Endothelial cell of umbilical vein (primary cell): ENCODE measurements at regions of chr17 and their contacts with region 1.

Region 1: GRCh38 chr17:42527273-42527703 is 8.8 kb upstream of the NAGLU start:
- DNase-seq: peak; percentile 90
- H3K4me3 ChIP-seq: no peak overlapping the region
- H3K27ac ChIP-seq: peak overlapping the region; percentile 32
- H3K4me1 ChIP-seq: peaks cover 19% of the 10 kb centered on the region
- H3K27me3 ChIP-seq: no peaks in the 10 kb centered on the region
- CTCF ChIP-seq: peak; percentile 85 to 86
- POLR2A ChIP-seq: no peak

Region 2: GRCh38 chr17:42067351-42068091 is 459.8 kb before region 1 on chr17:
- CTCF ChIA-PET with region 1: no interaction called
- POLR2A ChIA-PET with region 1: no interaction called
- dilution Hi-C with region 1: no loop called
- intact Hi-C with region 1: loop called (anchors 1 kb)
- DNase-seq: peak; percentile 57
- H3K4me3 ChIP-seq: no peak overlapping the region
- H3K27ac ChIP-seq: no peak overlapping the region
- H3K4me1 ChIP-seq: peaks cover 3% of the 10 kb centered on the region
- H3K27me3 ChIP-seq: peaks cover 0 to 9% of the 10 kb centered on the region in 2 experiments
- CTCF ChIP-seq: peak; percentile 76 to 89
- POLR2A ChIP-seq: no peak

Region 3: DNA sequence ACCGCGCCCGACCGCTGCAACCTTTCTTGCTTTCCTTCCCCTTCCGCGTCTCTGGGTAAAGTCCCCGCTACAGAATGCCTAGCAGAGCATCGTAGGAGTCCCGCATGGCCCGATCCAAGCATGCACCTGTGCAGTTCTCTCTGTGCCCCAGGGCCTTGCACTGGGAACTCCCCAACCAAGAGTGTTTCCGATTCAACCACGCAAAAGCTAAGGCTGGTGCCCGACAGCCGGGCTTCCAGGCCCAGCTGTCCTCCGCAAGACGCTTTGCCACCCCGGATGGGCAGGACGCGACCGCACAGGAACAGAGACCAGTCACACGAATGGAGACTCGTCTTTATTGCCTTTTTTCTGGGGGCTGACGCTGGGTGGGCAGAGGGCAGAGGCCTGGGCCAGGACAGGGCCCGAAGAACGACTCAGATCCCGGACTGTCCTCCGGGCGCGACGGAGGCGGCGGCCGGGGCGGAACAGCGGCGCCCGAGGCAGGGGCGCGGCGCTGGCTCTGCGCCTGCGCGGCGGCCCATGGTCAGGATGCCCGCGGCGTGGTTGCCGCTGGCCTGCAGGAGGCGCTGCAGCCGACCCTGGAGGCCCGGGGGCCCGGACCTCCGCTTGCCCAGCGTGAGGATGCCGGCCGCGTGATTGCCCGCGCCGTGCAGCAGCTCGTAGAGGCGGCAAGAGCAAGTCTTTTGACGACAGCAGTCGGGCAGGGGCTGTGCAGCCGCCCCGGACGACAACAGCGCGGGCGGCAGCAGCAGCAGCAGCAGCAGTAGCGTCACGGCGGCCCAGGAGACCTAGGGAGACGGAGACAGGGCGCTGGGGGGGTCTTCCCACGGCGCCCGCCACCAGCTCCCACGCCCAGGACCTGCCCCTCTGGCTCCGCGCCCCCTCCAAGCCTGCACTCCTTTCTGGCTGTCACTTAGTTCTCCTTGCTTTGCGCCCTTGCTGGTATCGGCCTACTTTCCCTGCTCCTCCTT is 343.3 kb before region 1 on chr17:
- CTCF ChIA-PET with region 1: interaction called, 5 read pairs
- POLR2A ChIA-PET with region 1: interaction called, 9 read pairs
- dilution Hi-C with region 1: no loop called
- intact Hi-C with region 1: loop called (anchors 1 kb)
- DNase-seq: peak; percentile 70
- H3K4me3 ChIP-seq: peak overlapping the region; percentile 35 to 51 (median 45)
- H3K27ac ChIP-seq: peak overlapping the region; percentile 16
- H3K4me1 ChIP-seq: peaks cover 14% of the 10 kb centered on the region
- H3K27me3 ChIP-seq: peaks cover 9 to 13% of the 10 kb centered on the region in 2 experiments
- CTCF ChIP-seq: peak; percentile 86 to 99
- POLR2A ChIP-seq: peak; percentile 38

Region 4: GRCh38 chr17:42214156-42214555 is 313.1 kb before region 1 on chr17:
- CTCF ChIA-PET with region 1: no interaction called
- POLR2A ChIA-PET with region 1: no interaction called
- dilution Hi-C with region 1: no loop called
- intact Hi-C with region 1: no loop called
- DNase-seq: no peak
- H3K4me3 ChIP-seq: no peak overlapping the region
- H3K27ac ChIP-seq: no peak overlapping the region
- H3K4me1 ChIP-seq: no peaks in the 10 kb centered on the region
- H3K27me3 ChIP-seq: no peaks in the 10 kb centered on the region
- CTCF ChIP-seq: no peak
- POLR2A ChIP-seq: no peak

Region 5: DNA sequence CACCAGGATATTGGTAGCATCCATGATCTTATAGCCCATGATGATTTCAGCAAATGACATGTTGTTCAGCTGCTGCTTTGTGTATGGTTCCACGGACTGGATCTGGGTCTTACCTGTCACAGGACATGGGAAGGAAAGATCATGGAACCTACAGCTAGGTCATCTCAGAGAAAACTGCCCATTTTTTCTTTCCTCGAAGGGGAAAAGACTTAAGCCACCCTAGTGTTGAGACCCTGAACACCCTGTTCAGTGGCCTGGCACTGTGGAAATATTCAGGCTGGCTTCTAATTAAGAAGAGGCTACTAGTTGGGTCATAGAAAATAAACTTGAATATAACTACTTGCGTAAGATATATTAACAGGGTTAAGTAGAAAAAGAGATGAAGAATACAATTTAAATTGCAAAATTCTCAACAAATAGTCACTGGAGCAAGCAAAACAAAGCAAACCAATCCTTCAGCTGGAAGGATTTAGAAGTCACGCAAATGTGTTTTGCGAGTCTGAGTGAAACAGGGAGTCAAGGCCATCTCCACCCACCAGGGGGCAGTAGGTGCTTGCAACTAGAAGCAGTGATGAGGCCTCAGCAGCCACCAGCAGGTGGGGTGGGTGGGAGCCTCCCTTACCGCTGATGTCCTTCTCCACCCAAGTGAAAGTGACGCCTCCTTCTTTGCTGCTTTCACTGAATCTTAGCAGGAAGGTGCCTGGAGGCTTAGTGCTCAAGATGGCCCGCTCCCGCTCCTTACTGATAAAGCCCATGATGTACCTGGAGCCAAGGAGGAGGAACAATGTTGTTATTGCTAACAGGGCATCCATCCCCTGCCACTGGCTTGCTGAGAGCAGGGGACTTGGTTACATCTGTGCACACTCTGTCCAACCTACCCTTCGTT is 204.7 kb before region 1 on chr17:
- CTCF ChIA-PET with region 1: interaction called, 94 read pairs
- POLR2A ChIA-PET with region 1: no interaction called
- dilution Hi-C with region 1: loop called (anchors 25 kb)
- intact Hi-C with region 1: loop called (anchors 1 kb)
- DNase-seq: peak; percentile 92
- H3K4me3 ChIP-seq: no peak overlapping the region
- H3K27ac ChIP-seq: peak overlapping the region; percentile 97
- H3K4me1 ChIP-seq: peaks cover 35% of the 10 kb centered on the region
- H3K27me3 ChIP-seq: no peaks in the 10 kb centered on the region
- CTCF ChIP-seq: peak; percentile 97 to 99
- POLR2A ChIP-seq: no peak

Region 6: GRCh38 chr17:42422958-42423712 is 104.2 kb before region 1 on chr17 and contains the start of gene CAVIN1:
- CTCF ChIA-PET with region 1: interaction called, 23 read pairs
- POLR2A ChIA-PET with region 1: interaction called, 6 read pairs
- dilution Hi-C with region 1: no loop called
- intact Hi-C with region 1: loop called (anchors 1 kb)
- DNase-seq: peak; percentile 95
- H3K4me3 ChIP-seq: peak within 1 kb of the TSS; percentile 67 to 84 (median 79)
- H3K27ac ChIP-seq: peak within 1 kb of the TSS; percentile 80
- H3K4me1 ChIP-seq: peaks cover 24% of the 10 kb centered on the region
- H3K27me3 ChIP-seq: no peaks in the 10 kb centered on the region
- CTCF ChIP-seq: no peak
- POLR2A ChIP-seq: peak; percentile 99
- total RNA-seq, gene CAVIN1: 663 and 684 TPM in 2 replicates

Region 7: DNA sequence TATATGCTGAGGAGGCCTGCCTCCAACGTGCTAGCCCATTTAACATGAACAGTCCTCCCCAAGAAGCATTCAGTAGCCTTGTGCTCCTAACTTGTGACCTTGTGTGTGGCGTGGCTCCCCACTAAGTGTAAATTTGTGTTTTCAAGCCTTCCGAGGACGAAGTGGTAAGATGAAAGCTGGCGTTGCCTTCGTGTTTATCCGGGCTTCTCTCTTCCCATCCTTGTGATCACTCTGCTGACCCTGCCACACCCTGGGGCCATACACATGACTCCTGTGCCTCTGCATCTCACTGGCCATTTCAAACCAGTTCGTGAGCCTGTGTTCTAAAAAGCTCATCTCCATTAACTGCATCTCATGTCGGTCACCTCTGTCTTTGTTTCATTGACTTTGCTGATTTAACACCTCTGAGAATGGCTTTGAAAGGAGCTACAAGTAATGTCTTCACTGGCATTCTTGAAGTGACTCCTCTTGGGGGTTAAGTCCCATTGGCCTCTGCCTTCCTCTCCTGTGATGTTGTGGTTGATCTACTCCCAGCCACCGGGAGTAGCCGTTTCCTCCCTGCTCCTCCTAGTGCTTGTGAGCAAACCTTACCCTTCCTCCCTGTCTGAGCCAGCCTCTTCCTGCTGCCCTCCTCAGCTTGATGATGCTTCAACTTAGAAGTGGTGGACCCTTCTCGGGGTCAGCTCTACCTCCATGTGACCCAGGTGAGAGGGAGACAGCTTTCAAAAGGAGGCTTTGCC is 18.7 kb before region 1 on chr17:
- CTCF ChIA-PET with region 1: interaction called, 27 read pairs
- POLR2A ChIA-PET with region 1: no interaction called
- dilution Hi-C with region 1: no loop called
- intact Hi-C with region 1: no loop called
- DNase-seq: peak; percentile 55
- H3K4me3 ChIP-seq: no peak overlapping the region
- H3K27ac ChIP-seq: peak overlapping the region; percentile 2
- H3K4me1 ChIP-seq: peaks cover 11% of the 10 kb centered on the region
- H3K27me3 ChIP-seq: no peaks in the 10 kb centered on the region
- CTCF ChIP-seq: no peak
- POLR2A ChIP-seq: no peak

Region 8: GRCh38 chr17:42809250-42809649 is 282.0 kb after region 1 on chr17:
- CTCF ChIA-PET with region 1: no interaction called
- POLR2A ChIA-PET with region 1: no interaction called
- dilution Hi-C with region 1: no loop called
- intact Hi-C with region 1: no loop called
- DNase-seq: no peak
- H3K4me3 ChIP-seq: no peak overlapping the region
- H3K27ac ChIP-seq: no peak overlapping the region
- H3K4me1 ChIP-seq: peaks cover 3% of the 10 kb centered on the region
- H3K27me3 ChIP-seq: no peaks in the 10 kb centered on the region
- CTCF ChIP-seq: no peak
- POLR2A ChIP-seq: no peak